HepG2 (cell line): ENCODE measurements at regions of chr19 and their contacts with region 1.

Region 1: GRCh38 chr19:13022859-13023636 is 27.8 kb downstream of the NFIX start:
- DNase-seq: peak; percentile 79
- ATAC-seq: peak; percentile 82
- H3K4me3 ChIP-seq: peak overlapping the region; percentile 52 to 71 (median 62)
- H3K27ac ChIP-seq: peak overlapping the region; percentile 73
- H3K4me1 ChIP-seq: peaks cover 83% of the 10 kb centered on the region
- H3K27me3 ChIP-seq: no peaks in the 10 kb centered on the region
- CTCF ChIP-seq: no peak
- EP300 ChIP-seq: no peak
- POLR2A ChIP-seq: no peak
- RAD21 ChIP-seq: no peak

Region 2: GRCh38 chr19:12956446-12957388 is 66.3 kb before region 1 on chr19 and contains the start of gene GADD45GIP1:
- CTCF ChIA-PET with region 1: no interaction called
- POLR2A ChIA-PET with region 1: no interaction called
- in situ Hi-C with region 1: no loop called
- intact Hi-C with region 1: no loop called
- DNase-seq: peak; percentile 67
- ATAC-seq: peak; percentile 92
- H3K4me3 ChIP-seq: peak within 1 kb of the TSS; percentile 82 to 93 (median 89)
- H3K27ac ChIP-seq: peak within 1 kb of the TSS; percentile 88
- H3K4me1 ChIP-seq: peaks cover 23% of the 10 kb centered on the region
- H3K27me3 ChIP-seq: no peaks in the 10 kb centered on the region
- CTCF ChIP-seq: 0 out of 2 replicates have a peak, but pooled peaks have one; percentile 5
- EP300 ChIP-seq: no peak; a peak in 1 of 4 replicates
- POLR2A ChIP-seq: peak; percentile 88 to 94
- RAD21 ChIP-seq: peak; percentile 35; the same call in 1 of the 2 replicates
- total RNA-seq, gene GADD45GIP1: 24.6 and 37.4 TPM in 2 replicates

Region 3: GRCh38 chr19:13051267-13052165 is 28.5 kb after region 1 on chr19:
- CTCF ChIA-PET with region 1: no interaction called
- POLR2A ChIA-PET with region 1: interaction called, 28 read pairs
- in situ Hi-C with region 1: no loop called
- intact Hi-C with region 1: no loop called
- DNase-seq: peak; percentile 54
- ATAC-seq: no peak; the same call in 2 of the 3 replicates
- H3K4me3 ChIP-seq: peak overlapping the region in 1 of 3 experiments; percentile 53; a peak in 1 of 6 replicates
- H3K27ac ChIP-seq: no peak overlapping the region
- H3K4me1 ChIP-seq: peaks cover 65% of the 10 kb centered on the region
- H3K27me3 ChIP-seq: no peaks in the 10 kb centered on the region
- CTCF ChIP-seq: no peak; the same call in 1 of the 2 replicates
- EP300 ChIP-seq: peak in 1 of 2 experiments; percentile 85; a peak in 2 of 4 replicates
- POLR2A ChIP-seq: no peak
- RAD21 ChIP-seq: peak; percentile 19; the same call in 1 of the 2 replicates